SK-N-SH (cell line): ENCODE measurements at regions of chr14 and their contacts with region 1.

Region 1: GRCh38 chr14:105931808-105932483 is 405.6 kb downstream of the TMEM121 start:
- DNase-seq: peak; percentile 83
- H3K4me3 ChIP-seq: no peak overlapping the region
- H3K27ac ChIP-seq: no peak overlapping the region
- H3K4me1 ChIP-seq: peaks cover 0 to 19% of the 10 kb centered on the region in 2 experiments; a peak in 1 of 4 replicates
- H3K27me3 ChIP-seq: no peaks in the 10 kb centered on the region
- CTCF ChIP-seq: no peak
- EP300 ChIP-seq: no peak
- RAD21 ChIP-seq: peak; percentile 86

Region 2: DNA sequence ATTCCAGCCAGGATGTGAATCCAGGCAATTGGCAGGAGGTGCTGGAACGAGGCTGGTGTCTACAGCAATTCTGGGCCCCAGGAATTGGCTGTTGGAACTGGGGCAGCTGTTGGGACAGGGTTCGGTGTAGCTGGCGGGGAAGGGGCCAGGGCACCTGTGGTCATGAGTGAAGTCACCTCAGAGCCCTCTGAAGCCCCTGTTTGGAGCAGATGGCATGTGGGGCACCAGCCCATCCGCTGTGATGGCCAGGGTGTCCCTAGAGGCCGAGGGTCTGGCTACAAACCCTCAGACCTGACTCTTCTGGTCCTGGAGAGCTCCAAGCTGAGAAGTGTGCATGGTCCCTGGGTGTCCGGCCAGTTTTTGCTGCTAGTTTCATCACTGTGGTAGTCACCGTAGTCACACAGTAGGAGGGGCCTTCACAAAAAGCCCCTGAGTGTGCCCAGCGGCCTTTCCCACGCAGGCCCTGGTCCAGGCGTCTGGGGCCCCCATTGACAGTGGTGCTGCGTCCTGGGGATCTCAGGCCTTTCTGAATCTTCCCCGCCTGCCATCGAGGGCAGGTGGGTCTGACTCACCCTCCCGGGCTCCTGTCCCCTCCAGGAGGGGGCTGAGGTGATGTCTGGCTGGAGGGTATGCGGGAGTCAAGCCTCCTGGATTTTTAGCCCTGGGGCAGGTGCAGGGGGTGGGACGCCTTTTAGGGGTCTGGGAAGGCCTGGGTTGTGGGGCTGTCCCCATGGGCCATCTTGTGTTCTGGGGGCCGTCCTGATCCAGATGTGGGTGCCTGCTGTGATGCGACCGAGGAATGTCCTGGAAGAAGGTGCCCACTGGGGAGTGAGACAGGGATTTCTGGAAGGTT is 37.6 kb before region 1 on chr14:
- CTCF ChIA-PET with region 1: no interaction called
- POLR2A ChIA-PET with region 1: no interaction called
- DNase-seq: no peak
- H3K4me3 ChIP-seq: no peak overlapping the region
- H3K27ac ChIP-seq: no peak overlapping the region
- H3K4me1 ChIP-seq: peaks cover 0 to 39% of the 10 kb centered on the region in 2 experiments; a peak in 1 of 4 replicates
- H3K27me3 ChIP-seq: no peaks in the 10 kb centered on the region
- CTCF ChIP-seq: no peak
- EP300 ChIP-seq: no peak
- RAD21 ChIP-seq: no peak

Region 3: DNA sequence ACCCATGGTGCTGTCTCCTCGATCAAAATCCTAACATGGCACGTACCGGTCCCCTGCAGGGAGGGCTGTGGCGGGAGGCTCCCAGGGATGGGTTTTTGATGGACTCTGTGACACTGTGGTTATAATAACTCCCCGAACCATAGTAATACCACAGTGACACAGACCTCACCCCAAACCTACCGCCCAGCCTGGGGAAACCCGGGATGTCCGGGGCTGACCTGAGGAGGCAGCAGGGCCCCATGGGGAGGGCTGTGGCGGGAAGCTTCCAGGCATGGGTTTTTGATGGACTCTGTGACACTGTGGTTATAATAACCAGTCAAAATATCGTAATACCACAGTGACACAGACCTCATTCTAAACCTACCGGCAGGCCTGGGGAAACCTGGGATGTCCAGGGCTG is 27.6 kb before region 1 on chr14:
- CTCF ChIA-PET with region 1: no interaction called
- POLR2A ChIA-PET with region 1: no interaction called
- DNase-seq: no peak
- H3K4me3 ChIP-seq: no peak overlapping the region
- H3K27ac ChIP-seq: peak overlapping the region in 1 of 2 experiments; percentile 72; a peak in 2 of 4 replicates
- H3K4me1 ChIP-seq: peaks cover 0 to 73% of the 10 kb centered on the region in 2 experiments; a peak in 1 of 4 replicates
- H3K27me3 ChIP-seq: no peaks in the 10 kb centered on the region
- CTCF ChIP-seq: no peak
- EP300 ChIP-seq: no peak
- RAD21 ChIP-seq: no peak

Region 4: GRCh38 chr14:105944632-105945610 is 13.0 kb after region 1 on chr14:
- CTCF ChIA-PET with region 1: interaction called, 54 read pairs
- POLR2A ChIA-PET with region 1: no interaction called
- DNase-seq: peak; percentile 85
- H3K4me3 ChIP-seq: peak overlapping the region in 1 of 2 experiments; percentile 11; a peak in 2 of 4 replicates
- H3K27ac ChIP-seq: no peak overlapping the region
- H3K4me1 ChIP-seq: no peaks in the 10 kb centered on the region; a peak in 1 of 4 replicates
- H3K27me3 ChIP-seq: no peaks in the 10 kb centered on the region; the same call in 1 of the 2 replicates
- CTCF ChIP-seq: peak; percentile 77
- EP300 ChIP-seq: no peak
- RAD21 ChIP-seq: peak; percentile 81